ENCODE measurements at regions of chr20 and their contacts with region 1.

Region 1: DNA sequence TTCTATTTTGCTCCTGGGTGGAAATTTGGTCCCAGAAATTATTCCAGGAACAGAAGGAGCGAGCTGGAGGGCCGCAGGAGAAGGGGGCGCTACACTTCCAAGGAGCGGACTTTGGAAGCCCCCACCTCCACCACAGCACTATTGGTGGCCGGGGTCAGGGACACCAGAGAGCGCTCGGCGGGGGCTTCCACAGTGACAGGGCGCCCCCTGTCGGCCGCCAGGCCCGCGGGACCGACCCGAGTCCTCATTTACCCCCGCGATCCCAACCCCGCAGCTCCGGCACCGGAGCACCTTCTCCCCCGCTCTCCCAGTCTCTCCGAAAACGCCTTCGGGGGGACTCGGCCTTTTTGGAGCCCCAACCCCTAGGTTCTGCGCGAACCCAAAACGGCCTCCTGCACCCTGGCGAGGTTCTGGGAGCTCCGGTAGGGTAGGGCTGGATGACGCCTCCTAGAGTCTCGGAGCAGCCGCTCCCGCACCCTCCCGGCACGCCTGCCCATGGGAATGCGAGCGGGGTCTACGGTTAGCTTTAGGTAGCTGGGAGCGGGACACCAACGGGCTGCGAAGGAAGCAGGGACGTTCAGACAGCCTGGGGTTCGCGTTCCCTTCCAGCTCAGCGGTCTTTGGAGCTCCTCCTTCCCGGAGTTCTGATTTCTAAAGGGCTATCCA is 2.4 kb upstream of the FOXA2 start:
- DNase-seq: peak; percentile 62 to 78 (median 72)
- ATAC-seq: peak; percentile 93
- H3K4me3 ChIP-seq: peak overlapping the region; percentile 26; the same call in 1 of the 2 replicates
- H3K27ac ChIP-seq: no peak overlapping the region
- H3K4me1 ChIP-seq: peaks cover 0 to 30% of the 10 kb centered on the region in 2 experiments; a peak in 2 of 5 replicates
- H3K27me3 ChIP-seq: no peaks in the 10 kb centered on the region; a peak in 2 of 5 replicates
- CTCF ChIP-seq: peak; percentile 68 to 82 (median 76)
- EP300 ChIP-seq: no peak
- POLR2A ChIP-seq: no peak
- RAD21 ChIP-seq: peak; percentile 85 to 87

Region 2: GRCh38 chr20:22324505-22324904 is 262.3 kb before region 1 on chr20:
- CTCF ChIA-PET with region 1: no interaction called
- POLR2A ChIA-PET with region 1: no interaction called
- in situ Hi-C with region 1: no loop called
- intact Hi-C with region 1: no loop called
- DNase-seq: no peak
- ATAC-seq: no peak
- H3K4me3 ChIP-seq: no peak overlapping the region
- H3K27ac ChIP-seq: no peak overlapping the region
- H3K4me1 ChIP-seq: no peaks in the 10 kb centered on the region
- H3K27me3 ChIP-seq: no peaks in the 10 kb centered on the region; a peak in 2 of 5 replicates
- CTCF ChIP-seq: no peak
- EP300 ChIP-seq: no peak
- POLR2A ChIP-seq: no peak
- RAD21 ChIP-seq: no peak

Region 3: DNA sequence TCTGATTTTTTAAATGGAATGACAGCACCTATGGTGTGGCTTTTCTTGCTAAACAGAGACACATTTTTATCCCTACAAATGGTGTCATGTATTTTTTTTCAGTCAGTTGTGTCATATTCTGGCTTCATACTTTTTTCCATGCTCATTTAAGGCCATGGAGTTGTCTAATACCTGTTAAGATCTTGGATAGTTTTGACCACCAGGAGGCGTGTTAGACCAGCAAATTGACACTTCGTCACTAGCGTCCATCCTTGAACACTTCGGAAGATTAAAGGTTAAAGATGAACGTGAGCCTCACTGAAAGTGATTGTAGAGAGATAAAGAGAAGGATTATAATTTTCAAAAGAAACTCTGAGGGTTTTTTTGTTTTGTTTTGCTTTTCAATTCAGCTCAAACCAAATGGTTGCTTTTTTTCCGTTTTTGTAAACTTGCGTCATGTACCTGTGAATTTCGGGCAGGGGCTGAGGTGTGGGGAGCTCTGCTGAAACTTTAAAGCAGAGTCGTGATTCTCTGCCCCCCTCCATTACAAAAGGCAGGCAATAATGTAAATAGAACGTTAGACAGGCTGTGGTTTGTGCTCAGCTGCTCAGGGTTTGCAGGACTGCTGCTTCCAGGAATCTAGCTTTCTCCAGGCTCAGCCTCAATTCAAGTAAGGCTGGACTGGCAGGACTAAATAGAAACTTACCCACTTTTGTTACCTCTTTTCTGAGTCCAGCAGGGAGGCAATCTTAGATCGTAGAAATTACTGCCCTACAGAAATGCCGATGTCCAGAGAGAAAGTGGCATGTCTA is 247.5 kb before region 1 on chr20:
- CTCF ChIA-PET with region 1: interaction called, 20 read pairs
- POLR2A ChIA-PET with region 1: no interaction called
- in situ Hi-C with region 1: loop called (anchors 5 kb)
- intact Hi-C with region 1: loop called (anchors 1 kb)
- DNase-seq: peak; percentile 29 to 77 (median 31)
- ATAC-seq: peak; percentile 87
- H3K4me3 ChIP-seq: no peak overlapping the region
- H3K27ac ChIP-seq: no peak overlapping the region
- H3K4me1 ChIP-seq: no peaks in the 10 kb centered on the region
- H3K27me3 ChIP-seq: no peaks in the 10 kb centered on the region
- CTCF ChIP-seq: peak; percentile 64 to 82 (median 71)
- EP300 ChIP-seq: no peak
- POLR2A ChIP-seq: no peak
- RAD21 ChIP-seq: peak; percentile 93 to 96

Region 4: GRCh38 chr20:22385602-22386305 is 201.0 kb before region 1 on chr20:
- CTCF ChIA-PET with region 1: interaction called, 14 read pairs
- POLR2A ChIA-PET with region 1: no interaction called
- in situ Hi-C with region 1: no loop called
- intact Hi-C with region 1: loop called (anchors 1 kb)
- DNase-seq: peak; percentile 10 to 55 (median 30)
- ATAC-seq: peak; percentile 94
- H3K4me3 ChIP-seq: no peak overlapping the region
- H3K27ac ChIP-seq: no peak overlapping the region
- H3K4me1 ChIP-seq: peaks cover 0 to 22% of the 10 kb centered on the region in 2 experiments; a peak in 2 of 5 replicates
- H3K27me3 ChIP-seq: no peaks in the 10 kb centered on the region
- CTCF ChIP-seq: peak; percentile 47 to 72 (median 54)
- EP300 ChIP-seq: no peak
- POLR2A ChIP-seq: no peak
- RAD21 ChIP-seq: peak; percentile 82 to 84

Region 5: GRCh38 chr20:22453239-22454080 is 133.3 kb before region 1 on chr20:
- CTCF ChIA-PET with region 1: no interaction called
- POLR2A ChIA-PET with region 1: no interaction called
- in situ Hi-C with region 1: no loop called
- intact Hi-C with region 1: loop called (anchors 10 kb)
- DNase-seq: peak; percentile 12 to 25 (median 19)
- ATAC-seq: no peak
- H3K4me3 ChIP-seq: no peak overlapping the region
- H3K27ac ChIP-seq: no peak overlapping the region
- H3K4me1 ChIP-seq: peaks cover 0 to 4% of the 10 kb centered on the region in 2 experiments; a peak in 2 of 5 replicates
- H3K27me3 ChIP-seq: no peaks in the 10 kb centered on the region
- CTCF ChIP-seq: peak; percentile 1 to 54 (median 51); a peak in 4 of 6 replicates
- EP300 ChIP-seq: no peak
- POLR2A ChIP-seq: no peak
- RAD21 ChIP-seq: peak; percentile 21 to 44; a peak in 1 of 4 replicates

Region 6: GRCh38 chr20:22490287-22491193 is 96.2 kb before region 1 on chr20:
- CTCF ChIA-PET with region 1: no interaction called
- POLR2A ChIA-PET with region 1: no interaction called
- in situ Hi-C with region 1: no loop called
- intact Hi-C with region 1: loop called (anchors 5 kb)
- DNase-seq: no peak
- ATAC-seq: no peak; the same call in 2 of the 3 replicates
- H3K4me3 ChIP-seq: no peak overlapping the region
- H3K27ac ChIP-seq: no peak overlapping the region
- H3K4me1 ChIP-seq: peaks cover 0 to 3% of the 10 kb centered on the region in 2 experiments; a peak in 2 of 5 replicates
- H3K27me3 ChIP-seq: no peaks in the 10 kb centered on the region
- CTCF ChIP-seq: peak in 1 of 3 experiments; percentile 25; a peak in 1 of 6 replicates
- EP300 ChIP-seq: no peak
- POLR2A ChIP-seq: no peak
- RAD21 ChIP-seq: no peak; a peak in 1 of 4 replicates

Region 7: GRCh38 chr20:22523499-22524392 is 63.0 kb before region 1 on chr20:
- CTCF ChIA-PET with region 1: no interaction called
- POLR2A ChIA-PET with region 1: no interaction called
- in situ Hi-C with region 1: no loop called
- intact Hi-C with region 1: loop called (anchors 10 kb)
- DNase-seq: no peak
- ATAC-seq: no peak
- H3K4me3 ChIP-seq: no peak overlapping the region
- H3K27ac ChIP-seq: no peak overlapping the region
- H3K4me1 ChIP-seq: no peaks in the 10 kb centered on the region; a peak in 2 of 5 replicates
- H3K27me3 ChIP-seq: peaks cover 0 to 4% of the 10 kb centered on the region in 2 experiments; a peak in 1 of 5 replicates
- CTCF ChIP-seq: no peak
- EP300 ChIP-seq: no peak
- POLR2A ChIP-seq: no peak
- RAD21 ChIP-seq: no peak

Region 8: DNA sequence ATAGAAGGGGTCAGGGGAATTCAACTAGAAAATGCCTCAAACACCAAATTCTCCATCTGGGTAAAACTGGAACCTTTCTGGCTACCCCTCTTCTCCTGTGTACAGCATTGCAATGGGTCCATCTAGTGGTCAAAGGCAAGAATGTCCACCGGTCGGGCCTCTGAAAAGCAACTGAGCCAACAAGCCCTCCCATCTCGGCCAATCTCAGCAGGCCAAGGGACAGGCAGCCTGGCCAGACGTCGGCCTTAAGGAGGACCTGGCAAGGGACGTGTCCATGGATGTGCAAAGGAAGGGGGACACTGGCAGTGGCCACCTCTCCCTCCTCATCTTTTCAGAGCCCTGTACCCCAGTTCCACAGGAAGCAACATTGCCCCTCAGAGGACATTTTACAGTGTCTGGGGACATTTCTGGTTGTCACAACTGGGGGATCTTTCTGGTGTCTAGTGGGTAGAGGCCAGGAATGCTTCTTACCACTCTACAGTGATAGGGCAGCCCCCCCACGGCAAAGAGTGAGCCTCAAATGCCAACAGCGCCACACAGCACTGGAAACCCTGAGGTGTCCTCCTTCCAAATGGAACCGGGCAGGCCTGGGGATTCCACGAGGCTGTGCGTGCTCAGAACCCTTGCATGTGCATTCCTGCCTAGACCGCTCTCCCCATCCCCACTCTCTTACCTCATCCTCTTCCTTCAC is 97.4 kb after region 1 on chr20:
- CTCF ChIA-PET with region 1: no interaction called
- POLR2A ChIA-PET with region 1: no interaction called
- in situ Hi-C with region 1: no loop called
- intact Hi-C with region 1: loop called (anchors 2 kb)
- DNase-seq: peak; percentile 57 to 69 (median 66)
- ATAC-seq: peak; percentile 95
- H3K4me3 ChIP-seq: no peak overlapping the region
- H3K27ac ChIP-seq: no peak overlapping the region; the same call in 2 of the 3 replicates
- H3K4me1 ChIP-seq: peaks cover 0 to 7% of the 10 kb centered on the region in 2 experiments; a peak in 1 of 5 replicates
- H3K27me3 ChIP-seq: no peaks in the 10 kb centered on the region; a peak in 2 of 5 replicates
- CTCF ChIP-seq: peak; percentile 78 to 89 (median 80)
- EP300 ChIP-seq: no peak
- POLR2A ChIP-seq: no peak
- RAD21 ChIP-seq: peak; percentile 86 to 91